IMR-90 (cell line): ENCODE measurements at regions of chr7 and their contacts with region 1.

Region 1: GRCh38 chr7:32204361-32205018 is 134.3 kb upstream of the PDE1C start:
- DNase-seq: peak; percentile 77
- ATAC-seq: peak; percentile 96
- H3K4me3 ChIP-seq: no peak overlapping the region
- H3K27ac ChIP-seq: no peak overlapping the region
- H3K4me1 ChIP-seq: no peaks in the 10 kb centered on the region
- H3K27me3 ChIP-seq: peaks cover 5% of the 10 kb centered on the region
- CTCF ChIP-seq: peak; percentile 81
- POLR2A ChIP-seq: 0 out of 2 replicates have a peak, but pooled peaks have one; percentile 31
- RAD21 ChIP-seq: peak; percentile 92

Region 2: DNA sequence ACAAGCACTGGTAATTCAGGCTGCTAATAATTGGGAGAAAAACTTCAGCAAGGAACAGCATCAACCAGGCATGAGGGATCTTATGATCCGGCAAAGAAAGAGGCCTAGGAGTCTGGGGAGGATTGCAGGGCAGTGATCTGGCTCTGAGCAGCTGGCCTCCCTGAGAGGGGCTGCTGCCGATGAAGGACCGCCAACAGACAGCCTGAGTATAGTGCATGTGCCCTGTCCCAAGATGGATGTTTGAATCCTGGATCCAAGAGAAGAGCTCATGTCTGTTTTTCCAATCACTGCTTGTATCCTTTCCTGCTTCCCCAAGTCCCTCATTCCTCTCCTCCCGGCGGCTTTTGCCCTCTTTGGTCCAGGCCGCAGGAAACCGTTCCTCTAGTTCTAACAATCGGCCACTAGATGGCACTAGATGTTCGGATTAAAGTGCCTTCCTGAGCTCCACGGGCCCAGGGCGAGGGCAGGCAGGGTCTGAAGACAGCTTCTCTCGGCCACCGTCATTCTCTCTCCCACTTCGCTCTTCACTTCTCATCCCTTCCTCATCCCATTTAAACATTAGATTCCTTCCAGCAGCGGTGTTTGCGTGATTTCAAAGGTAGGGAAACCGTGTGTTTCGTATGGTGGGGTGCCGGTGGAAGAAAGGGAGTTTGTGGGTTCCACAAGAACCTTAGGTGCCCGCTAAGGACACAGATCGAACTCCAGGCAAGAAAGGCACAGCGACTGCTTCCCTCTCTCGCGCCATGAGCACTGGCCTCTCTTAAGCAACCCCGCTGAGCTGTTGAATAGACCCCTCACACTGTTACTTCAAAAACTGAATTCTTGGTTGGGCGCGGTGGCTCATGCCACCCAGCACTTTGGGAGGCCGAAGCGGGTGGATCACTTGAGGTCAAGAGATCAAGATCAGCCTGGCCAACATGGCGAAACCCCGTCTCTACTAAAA is 1070.0 kb before region 1 on chr7:
- CTCF ChIA-PET with region 1: no interaction called
- POLR2A ChIA-PET with region 1: no interaction called
- dilution Hi-C with region 1: no loop called
- in situ Hi-C with region 1: no loop called
- intact Hi-C with region 1: loop called (anchors 10 kb)
- DNase-seq: peak; percentile 54
- ATAC-seq: peak; percentile 100
- H3K4me3 ChIP-seq: no peak overlapping the region
- H3K27ac ChIP-seq: no peak overlapping the region
- H3K4me1 ChIP-seq: no peaks in the 10 kb centered on the region
- H3K27me3 ChIP-seq: no peaks in the 10 kb centered on the region; the same call in 1 of the 2 replicates
- CTCF ChIP-seq: peak; percentile 68
- POLR2A ChIP-seq: no peak
- RAD21 ChIP-seq: peak; percentile 62

Region 3: GRCh38 chr7:31443457-31443856 is 761.0 kb before region 1 on chr7:
- CTCF ChIA-PET with region 1: no interaction called
- POLR2A ChIA-PET with region 1: no interaction called
- dilution Hi-C with region 1: no loop called
- in situ Hi-C with region 1: no loop called
- intact Hi-C with region 1: loop called (anchors 1 kb)
- DNase-seq: peak; percentile 45
- ATAC-seq: peak; percentile 81
- H3K4me3 ChIP-seq: no peak overlapping the region
- H3K27ac ChIP-seq: no peak overlapping the region
- H3K4me1 ChIP-seq: no peaks in the 10 kb centered on the region
- H3K27me3 ChIP-seq: no peaks in the 10 kb centered on the region
- CTCF ChIP-seq: peak; percentile 67
- POLR2A ChIP-seq: no peak
- RAD21 ChIP-seq: peak; percentile 58

Region 4: DNA sequence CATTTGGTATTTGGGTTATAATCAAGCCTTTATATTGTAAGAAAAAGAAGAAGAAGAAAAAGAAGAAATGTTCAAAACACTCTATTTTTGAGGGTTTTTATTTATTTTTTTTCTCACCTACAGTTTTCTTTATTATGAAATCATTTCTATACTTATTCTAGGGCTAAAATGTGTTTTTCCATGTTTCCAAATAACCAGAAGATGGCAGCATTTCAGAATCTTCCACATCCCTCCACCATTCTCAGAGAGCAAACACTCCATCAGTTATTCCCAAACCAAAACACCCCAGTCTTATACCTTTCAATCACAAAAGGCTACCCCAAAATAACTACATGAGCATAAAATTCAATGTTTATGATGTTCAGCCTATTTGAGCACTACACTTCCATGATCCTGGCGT is 556.2 kb before region 1 on chr7:
- CTCF ChIA-PET with region 1: no interaction called
- POLR2A ChIA-PET with region 1: no interaction called
- dilution Hi-C with region 1: no loop called
- in situ Hi-C with region 1: no loop called
- intact Hi-C with region 1: loop called (anchors 1 kb)
- DNase-seq: peak; percentile 1
- ATAC-seq: no peak
- H3K4me3 ChIP-seq: no peak overlapping the region
- H3K27ac ChIP-seq: no peak overlapping the region
- H3K4me1 ChIP-seq: no peaks in the 10 kb centered on the region
- H3K27me3 ChIP-seq: no peaks in the 10 kb centered on the region; the same call in 1 of the 2 replicates
- CTCF ChIP-seq: peak; percentile 27; the same call in 1 of the 2 replicates
- POLR2A ChIP-seq: no peak
- RAD21 ChIP-seq: peak; percentile 23; the same call in 1 of the 2 replicates

Region 5: GRCh38 chr7:31744294-31744874 is 460.1 kb before region 1 on chr7:
- CTCF ChIA-PET with region 1: interaction called, 4 read pairs
- POLR2A ChIA-PET with region 1: no interaction called
- dilution Hi-C with region 1: no loop called
- in situ Hi-C with region 1: loop called (anchors 5 kb)
- intact Hi-C with region 1: loop called (anchors 1 kb)
- DNase-seq: peak; percentile 73
- ATAC-seq: peak; percentile 91
- H3K4me3 ChIP-seq: no peak overlapping the region
- H3K27ac ChIP-seq: no peak overlapping the region
- H3K4me1 ChIP-seq: peaks cover 3% of the 10 kb centered on the region; the same call in 1 of the 2 replicates
- H3K27me3 ChIP-seq: no peaks in the 10 kb centered on the region
- CTCF ChIP-seq: peak; percentile 91
- POLR2A ChIP-seq: peak; percentile 45; the same call in 1 of the 2 replicates
- RAD21 ChIP-seq: peak; percentile 95

Region 6: GRCh38 chr7:32070406-32071360 is 133.8 kb before region 1 on chr7 and contains the start of gene PDE1C:
- CTCF ChIA-PET with region 1: no interaction called
- POLR2A ChIA-PET with region 1: no interaction called
- dilution Hi-C with region 1: no loop called
- in situ Hi-C with region 1: no loop called
- intact Hi-C with region 1: loop called (anchors 2 kb)
- DNase-seq: peak; percentile 19
- ATAC-seq: peak; percentile 76
- H3K4me3 ChIP-seq: peak within 1 kb of the TSS; percentile 91
- H3K27ac ChIP-seq: peak within 1 kb of the TSS; percentile 49
- H3K4me1 ChIP-seq: peaks cover 5% of the 10 kb centered on the region; the same call in 1 of the 2 replicates
- H3K27me3 ChIP-seq: no peaks in the 10 kb centered on the region
- CTCF ChIP-seq: no peak
- POLR2A ChIP-seq: no peak
- RAD21 ChIP-seq: no peak
- total RNA-seq, gene PDE1C: 53.3 and 61.5 TPM in 2 replicates